Activated T-helper 1 cell treated with anti-CD3 and anti-CD28 coated beads, Interleukin-12 subunit alpha, Interleukin-12 subunit beta, Interleukin-2, Interleukin-4 antibody, amounts not matched to agents 30 ng/mL and 10 ng/mL and 1 ng/mL, durations not matched to agents 14 hours and 24 hours and 36 hours (primary cell): ENCODE measurements at regions of chr1 and their contacts with region 1.

Region 1: GRCh38 chr1:61049850-61050540 is 32.4 kb upstream of the NFIA start:
- DNase-seq: peak; percentile 81
- H3K4me3 Mint-ChIP-seq: peak overlapping the region; percentile 74
- H3K27ac Mint-ChIP-seq: no peak overlapping the region
- H3K4me1 Mint-ChIP-seq: peaks cover 31% of the 10 kb centered on the region
- H3K27me3 Mint-ChIP-seq: peaks cover 48% of the 10 kb centered on the region

Region 2: DNA sequence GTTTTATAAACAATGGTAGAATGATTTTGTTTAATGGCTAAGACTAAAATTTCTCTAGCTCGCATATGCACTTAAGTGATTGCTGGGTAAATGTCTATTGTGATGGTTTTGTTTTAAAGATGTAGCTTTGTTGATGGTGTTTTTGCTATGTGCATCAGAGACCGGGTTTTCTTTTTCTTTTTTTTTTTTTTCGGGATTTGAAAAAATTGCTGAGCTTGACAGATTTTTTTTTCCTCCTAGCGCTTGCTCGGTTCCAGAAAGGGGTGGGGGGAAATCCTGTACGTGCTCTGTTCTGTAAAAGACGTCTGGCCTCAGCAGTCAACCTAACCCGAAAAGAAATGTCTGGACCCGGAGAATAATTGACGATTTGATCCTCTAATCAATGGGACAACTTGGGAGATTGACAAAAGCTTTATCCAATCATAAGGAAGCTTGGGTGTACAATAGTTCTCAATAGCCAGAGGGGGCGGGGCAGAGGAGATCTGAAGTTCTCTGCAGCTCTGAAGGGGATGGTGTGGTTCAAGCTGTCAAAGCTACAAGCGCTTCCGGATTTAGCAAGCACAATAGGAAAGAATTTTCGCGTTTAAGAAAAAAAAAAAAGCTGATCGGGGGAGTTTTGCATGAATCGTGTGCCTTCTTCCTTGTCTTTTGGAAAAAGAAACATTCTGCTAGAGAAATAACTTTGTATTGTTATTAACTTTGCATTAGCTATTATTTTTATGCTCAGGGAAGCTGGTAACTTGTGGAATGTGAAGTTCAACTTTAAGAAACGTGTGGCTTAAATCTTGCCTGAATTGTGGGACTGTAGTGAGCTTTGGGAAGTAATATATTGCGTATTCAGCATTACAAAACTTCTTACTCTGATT is 27.9 kb after region 1 on chr1:
- intact Hi-C with region 1: loop called (anchors 1 kb)
- DNase-seq: peak; percentile 80
- H3K4me3 Mint-ChIP-seq: peak overlapping the region; percentile 92
- H3K27ac Mint-ChIP-seq: peak overlapping the region; percentile 16
- H3K4me1 Mint-ChIP-seq: peaks cover 43% of the 10 kb centered on the region
- H3K27me3 Mint-ChIP-seq: peaks cover 50% of the 10 kb centered on the region

Region 3: GRCh38 chr1:61352845-61353435 is 302.9 kb after region 1 on chr1:
- intact Hi-C with region 1: loop called (anchors 1 kb)
- DNase-seq: no peak
- H3K4me3 Mint-ChIP-seq: no peak overlapping the region
- H3K27ac Mint-ChIP-seq: no peak overlapping the region
- H3K4me1 Mint-ChIP-seq: no peaks in the 10 kb centered on the region
- H3K27me3 Mint-ChIP-seq: peaks cover 9% of the 10 kb centered on the region

Region 4: GRCh38 chr1:61588736-61589672 is 539.0 kb after region 1 on chr1:
- intact Hi-C with region 1: loop called (anchors 1 kb)
- DNase-seq: peak; percentile 37
- H3K4me3 Mint-ChIP-seq: no peak overlapping the region
- H3K27ac Mint-ChIP-seq: no peak overlapping the region
- H3K4me1 Mint-ChIP-seq: no peaks in the 10 kb centered on the region
- H3K27me3 Mint-ChIP-seq: peaks cover 18% of the 10 kb centered on the region

Region 5: GRCh38 chr1:61851849-61852669 is 802.1 kb after region 1 on chr1:
- intact Hi-C with region 1: loop called (anchors 2 kb)
- DNase-seq: no peak
- H3K4me3 Mint-ChIP-seq: no peak overlapping the region
- H3K27ac Mint-ChIP-seq: no peak overlapping the region
- H3K4me1 Mint-ChIP-seq: no peaks in the 10 kb centered on the region
- H3K27me3 Mint-ChIP-seq: no peaks in the 10 kb centered on the region